Naive thymus-derived CD4-positive, alpha-beta T cell (primary cell): ENCODE measurements at regions of chr10 and their contacts with region 1.

Region 1: DNA sequence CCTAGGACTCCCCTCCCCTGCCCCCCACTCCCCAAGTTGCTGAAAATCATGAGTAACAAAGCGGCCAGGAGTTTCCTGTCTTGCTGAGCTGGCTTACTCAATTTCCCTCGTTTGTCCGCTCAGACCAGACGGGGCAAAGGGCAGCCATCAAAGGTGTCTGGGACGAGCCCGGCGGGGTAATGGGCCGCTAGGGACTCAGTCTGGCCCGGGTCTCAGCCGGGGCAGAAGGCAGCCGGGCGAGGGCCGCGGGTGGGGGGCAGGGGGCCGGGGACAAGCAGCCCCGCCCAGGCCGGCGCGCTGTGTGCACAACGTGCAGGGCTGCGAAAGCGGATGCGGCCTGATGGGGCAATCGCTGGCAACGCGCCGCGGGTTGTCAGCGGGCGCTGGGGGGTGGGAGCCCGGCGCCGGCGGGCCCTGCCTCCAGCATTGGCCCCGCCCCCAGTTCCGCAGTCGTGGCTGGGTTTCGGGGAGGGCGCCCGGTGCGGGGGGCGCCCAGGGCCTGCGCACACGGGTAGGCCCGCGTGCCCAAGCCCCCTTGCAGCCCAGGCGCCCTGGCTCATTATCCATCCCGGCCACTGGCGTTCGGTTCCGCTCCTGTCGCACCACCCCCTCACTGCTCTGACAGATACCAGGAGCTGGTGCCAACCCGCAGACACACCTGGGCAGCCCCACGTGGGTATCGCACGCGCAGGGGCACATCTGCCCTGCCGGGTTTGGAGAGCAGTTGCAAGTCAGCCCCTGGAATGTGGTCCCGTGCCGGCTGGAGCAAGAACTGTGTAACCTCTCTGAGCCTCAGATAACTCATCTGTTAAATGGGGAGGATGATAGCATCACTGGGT is 35.1 kb downstream of the DNAJB12 start:
- DNase-seq: peak; percentile 82 to 90 (median 88)
- ATAC-seq: peak; percentile 85
- H3K4me3 ChIP-seq: peak overlapping the region; percentile 60
- H3K4me3 Mint-ChIP-seq: peak overlapping the region; percentile 69 to 89 (median 82)
- H3K27ac ChIP-seq: peak overlapping the region; percentile 94
- H3K27ac Mint-ChIP-seq: peak overlapping the region; percentile 90 to 98 (median 97)
- H3K4me1 ChIP-seq: peaks cover 61 to 90% of the 10 kb centered on the region in 2 donors
- H3K4me1 Mint-ChIP-seq: peaks cover 58 to 90% (median 83%) of the 10 kb centered on the region in 7 donors
- H3K27me3 ChIP-seq: no peaks in the 10 kb centered on the region
- H3K27me3 Mint-ChIP-seq: no peaks in the 10 kb centered on the region

Region 2: GRCh38 chr10:72146071-72146470 is 173.6 kb before region 1 on chr10:
- CTCF ChIA-PET with region 1: no interaction called
- POLR2A ChIA-PET with region 1: no interaction called
- intact Hi-C with region 1: no loop called
- DNase-seq: no peak
- ATAC-seq: no peak
- H3K4me3 ChIP-seq: no peak overlapping the region
- H3K4me3 Mint-ChIP-seq: no peak overlapping the region
- H3K27ac ChIP-seq: no peak overlapping the region
- H3K27ac Mint-ChIP-seq: peak overlapping the region in 1 of 9 donors; percentile 29
- H3K4me1 ChIP-seq: no peaks in the 10 kb centered on the region
- H3K4me1 Mint-ChIP-seq: peaks cover 0 to 21% (median 5%) of the 10 kb centered on the region in 7 donors
- H3K27me3 ChIP-seq: no peaks in the 10 kb centered on the region
- H3K27me3 Mint-ChIP-seq: no peaks in the 10 kb centered on the region

Region 3: GRCh38 chr10:72260588-72261322 is 58.9 kb before region 1 on chr10:
- CTCF ChIA-PET with region 1: no interaction called
- POLR2A ChIA-PET with region 1: interaction called, 11 read pairs
- intact Hi-C with region 1: loop called (anchors 1 kb)
- DNase-seq: peak; percentile 55 to 89 (median 63)
- ATAC-seq: peak; percentile 85
- H3K4me3 ChIP-seq: peak overlapping the region; percentile 68
- H3K4me3 Mint-ChIP-seq: peak overlapping the region; percentile 83 to 93 (median 90)
- H3K27ac ChIP-seq: peak overlapping the region; percentile 78
- H3K27ac Mint-ChIP-seq: peak overlapping the region; percentile 87 to 97 (median 94)
- H3K4me1 ChIP-seq: peaks cover 45 to 63% of the 10 kb centered on the region in 2 donors
- H3K4me1 Mint-ChIP-seq: peaks cover 32 to 83% (median 67%) of the 10 kb centered on the region in 7 donors
- H3K27me3 ChIP-seq: no peaks in the 10 kb centered on the region
- H3K27me3 Mint-ChIP-seq: no peaks in the 10 kb centered on the region

Region 4: GRCh38 chr10:72292223-72292691 is 27.4 kb before region 1 on chr10:
- CTCF ChIA-PET with region 1: interaction called, 6 read pairs
- POLR2A ChIA-PET with region 1: interaction called, 68 read pairs
- intact Hi-C with region 1: loop called (anchors 1 kb)
- DNase-seq: no peak
- ATAC-seq: no peak
- H3K4me3 ChIP-seq: no peak overlapping the region
- H3K4me3 Mint-ChIP-seq: peak overlapping the region in 8 of 10 donors; percentile 2 to 63 (median 40)
- H3K27ac ChIP-seq: peak overlapping the region; percentile 8
- H3K27ac Mint-ChIP-seq: peak overlapping the region; percentile 57 to 100 (median 83)
- H3K4me1 ChIP-seq: peaks cover 24 to 43% of the 10 kb centered on the region in 2 donors
- H3K4me1 Mint-ChIP-seq: peaks cover 39 to 66% (median 64%) of the 10 kb centered on the region in 7 donors
- H3K27me3 ChIP-seq: no peaks in the 10 kb centered on the region
- H3K27me3 Mint-ChIP-seq: no peaks in the 10 kb centered on the region

Region 5: DNA sequence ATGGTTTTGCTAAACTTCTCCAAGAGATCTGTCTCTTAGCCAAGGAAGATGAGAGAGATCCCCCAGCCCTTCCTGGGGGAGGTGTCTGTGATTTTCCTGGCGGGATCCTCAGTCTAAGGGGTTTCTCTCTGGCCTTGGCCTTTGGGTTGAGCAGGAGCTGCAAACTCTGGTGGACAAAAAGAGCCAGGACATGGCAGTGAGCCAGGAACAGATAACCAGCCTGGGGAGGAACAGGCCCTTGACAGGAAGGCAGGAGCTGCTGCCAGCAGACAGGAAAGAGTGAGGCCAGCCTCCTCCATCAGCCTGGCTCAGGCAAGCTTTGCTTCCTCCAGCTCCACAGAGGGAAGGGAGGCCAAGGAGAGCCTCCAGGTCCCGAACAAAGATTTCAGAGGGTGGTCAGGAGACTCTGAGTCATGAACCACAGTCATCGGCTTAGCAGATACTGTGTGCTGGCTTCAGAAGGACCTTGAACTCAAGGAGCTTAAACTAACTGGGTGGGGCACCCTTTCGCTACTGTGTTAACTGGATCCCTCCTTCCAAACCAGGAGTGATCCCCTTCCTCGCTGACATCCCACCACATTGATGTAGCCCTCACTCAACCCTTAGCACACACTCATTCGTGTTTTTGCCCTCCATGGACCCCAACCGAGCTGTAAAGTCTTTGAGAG is 11.2 kb before region 1 on chr10:
- CTCF ChIA-PET with region 1: interaction called, 5 read pairs
- POLR2A ChIA-PET with region 1: interaction called, 172 read pairs
- intact Hi-C with region 1: loop called in 1 of 2 experiments (anchors 1 kb)
- DNase-seq: peak in 2 of 9 donors; percentile 12 to 47
- ATAC-seq: peak; percentile 65
- H3K4me3 ChIP-seq: no peak overlapping the region
- H3K4me3 Mint-ChIP-seq: peak overlapping the region in 7 of 10 donors; percentile 14 to 67 (median 49)
- H3K27ac ChIP-seq: peak overlapping the region; percentile 44
- H3K27ac Mint-ChIP-seq: peak overlapping the region; percentile 62 to 89 (median 80)
- H3K4me1 ChIP-seq: peaks cover 0 to 66% of the 10 kb centered on the region in 2 donors
- H3K4me1 Mint-ChIP-seq: peaks cover 43 to 89% (median 72%) of the 10 kb centered on the region in 7 donors
- H3K27me3 ChIP-seq: no peaks in the 10 kb centered on the region
- H3K27me3 Mint-ChIP-seq: no peaks in the 10 kb centered on the region